ENCODE measurements at regions of chr20 and their contacts with region 1.

Region 1: GRCh38 chr20:54320115-54320607 is 112.3 kb downstream of the PFDN4 start:
- DNase-seq: no peak
- H3K4me3 Mint-ChIP-seq: no peak overlapping the region
- H3K27ac Mint-ChIP-seq: peak overlapping the region; percentile 67
- H3K4me1 Mint-ChIP-seq: peaks cover 40% of the 10 kb centered on the region
- H3K27me3 Mint-ChIP-seq: no peaks in the 10 kb centered on the region

Region 2: GRCh38 chr20:54364919-54365318 is 44.8 kb after region 1 on chr20:
- intact Hi-C with region 1: loop called (anchors 1 kb)
- DNase-seq: no peak
- H3K4me3 Mint-ChIP-seq: no peak overlapping the region
- H3K27ac Mint-ChIP-seq: no peak overlapping the region
- H3K4me1 Mint-ChIP-seq: peaks cover 10% of the 10 kb centered on the region
- H3K27me3 Mint-ChIP-seq: no peaks in the 10 kb centered on the region